A549 (cell line): ENCODE measurements at regions of chr10 and their contacts with region 1.

Region 1: DNA sequence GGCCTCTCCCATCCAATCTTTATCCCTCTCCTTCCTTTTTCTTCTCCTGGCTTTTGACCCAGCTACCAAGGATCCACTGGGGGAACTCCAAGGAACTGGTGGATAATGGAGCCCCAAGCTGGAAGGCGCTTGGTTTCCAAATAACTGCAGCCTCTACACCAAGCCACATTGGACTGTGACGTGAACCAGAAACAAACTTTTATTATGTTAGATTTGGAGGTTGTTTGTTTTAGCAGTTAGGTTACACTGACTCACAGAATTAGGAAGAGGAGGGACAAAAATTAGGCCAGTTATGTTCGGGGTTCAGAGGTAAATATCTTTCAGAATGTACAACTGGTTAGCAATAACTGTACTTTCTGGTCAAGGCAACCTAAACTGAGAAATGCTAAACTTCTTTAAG is 21.3 kb upstream of the ANK3 start:
- DNase-seq: no peak
- ATAC-seq: no peak
- H3K4me3 ChIP-seq: no peak overlapping the region
- H3K27ac ChIP-seq: peak overlapping the region in 1 of 2 experiments; percentile 25; a peak in 1 of 6 replicates
- H3K4me1 ChIP-seq: peaks cover 27% of the 10 kb centered on the region
- CTCF ChIP-seq: no peak
- EP300 ChIP-seq: no peak
- POLR2A ChIP-seq: no peak
- RAD21 ChIP-seq: no peak

Region 2: DNA sequence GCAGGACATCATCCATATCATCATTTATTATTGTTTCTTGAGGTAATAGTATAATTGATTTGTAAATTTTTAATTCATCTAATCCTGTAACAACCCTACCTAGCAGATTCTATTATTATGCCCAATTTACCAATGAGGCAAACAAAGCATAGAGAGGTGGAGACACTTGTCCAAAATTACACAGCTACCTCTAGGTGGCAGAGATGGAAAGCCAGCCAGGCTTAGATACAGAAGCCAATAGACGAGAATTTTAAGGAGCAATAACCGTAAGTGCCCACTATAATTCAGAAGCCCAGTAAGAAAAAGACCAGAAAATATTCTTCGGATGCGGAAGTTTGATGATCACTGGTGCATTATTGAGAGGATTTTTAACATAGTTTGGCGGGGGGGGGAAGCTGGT is 75.3 kb before region 1 on chr10:
- CTCF ChIA-PET with region 1: interaction called, 10 read pairs
- POLR2A ChIA-PET with region 1: no interaction called
- DNase-seq: peak in 1 of 2 experiments; percentile 18
- ATAC-seq: peak; percentile 84 to 85; a peak in 5 of 6 replicates
- H3K4me3 ChIP-seq: no peak overlapping the region
- H3K27ac ChIP-seq: no peak overlapping the region
- H3K4me1 ChIP-seq: no peaks in the 10 kb centered on the region
- CTCF ChIP-seq: peak; percentile 56
- EP300 ChIP-seq: no peak
- POLR2A ChIP-seq: no peak
- RAD21 ChIP-seq: peak; percentile 75 to 79